PC-3 (cell line): ENCODE measurements at regions of chr15 and their contacts with region 1.

Region 1: DNA sequence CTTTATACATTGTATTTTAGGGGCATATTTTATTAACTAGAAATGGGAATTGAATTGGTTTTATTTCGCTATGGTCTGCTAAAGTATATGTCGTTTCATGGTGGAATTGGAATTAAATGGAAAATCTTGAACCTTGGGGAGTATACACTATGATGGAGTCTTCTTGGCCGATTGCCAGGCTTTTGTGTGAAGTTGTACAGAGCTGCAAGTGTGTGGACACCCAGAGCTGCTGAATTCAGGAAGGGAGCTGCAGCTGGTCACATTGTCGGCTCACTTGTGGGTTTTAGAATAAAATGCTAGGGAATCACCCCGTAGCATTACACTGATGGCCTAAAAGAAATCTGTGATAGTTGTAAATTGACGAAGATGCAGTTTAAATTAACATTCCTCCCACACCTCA is 35.1 kb downstream of the USP3 start:
- DNase-seq: no peak
- ATAC-seq: no peak
- H3K4me3 ChIP-seq: no peak overlapping the region
- H3K27ac ChIP-seq: no peak overlapping the region
- H3K4me1 ChIP-seq: no peaks in the 10 kb centered on the region
- H3K27me3 ChIP-seq: no peaks in the 10 kb centered on the region
- CTCF ChIP-seq: no peak

Region 2: GRCh38 chr15:63504247-63504978 is 35.1 kb before region 1 on chr15 and contains the start of gene USP3:
- CTCF ChIA-PET with region 1: no interaction called
- POLR2A ChIA-PET with region 1: no interaction called
- intact Hi-C with region 1: no loop called
- DNase-seq: peak; percentile 91
- ATAC-seq: peak; percentile 53
- H3K4me3 ChIP-seq: peak within 1 kb of the TSS; percentile 85
- H3K27ac ChIP-seq: peak within 1 kb of the TSS; percentile 100
- H3K4me1 ChIP-seq: peaks cover 79% of the 10 kb centered on the region
- H3K27me3 ChIP-seq: no peaks in the 10 kb centered on the region
- CTCF ChIP-seq: no peak
- total RNA-seq, gene USP3: 26.9 and 27.3 TPM in 2 replicates

Region 3: GRCh38 chr15:64398575-64398974 is 859.1 kb after region 1 on chr15:
- CTCF ChIA-PET with region 1: no interaction called
- POLR2A ChIA-PET with region 1: interaction called, 25 read pairs
- intact Hi-C with region 1: no loop called
- DNase-seq: no peak
- ATAC-seq: no peak
- H3K4me3 ChIP-seq: no peak overlapping the region
- H3K27ac ChIP-seq: no peak overlapping the region
- H3K4me1 ChIP-seq: no peaks in the 10 kb centered on the region
- H3K27me3 ChIP-seq: no peaks in the 10 kb centered on the region
- CTCF ChIP-seq: no peak